GM13976 (cell line): ENCODE measurements at regions of chr1 and their contacts with region 1.

Region 1: GRCh38 chr1:115807723-115808122 is 33.2 kb downstream of the NHLH2 start:
- DNase-seq: peak; percentile 41
- CTCF ChIP-seq: peak; percentile 55

Region 2: DNA sequence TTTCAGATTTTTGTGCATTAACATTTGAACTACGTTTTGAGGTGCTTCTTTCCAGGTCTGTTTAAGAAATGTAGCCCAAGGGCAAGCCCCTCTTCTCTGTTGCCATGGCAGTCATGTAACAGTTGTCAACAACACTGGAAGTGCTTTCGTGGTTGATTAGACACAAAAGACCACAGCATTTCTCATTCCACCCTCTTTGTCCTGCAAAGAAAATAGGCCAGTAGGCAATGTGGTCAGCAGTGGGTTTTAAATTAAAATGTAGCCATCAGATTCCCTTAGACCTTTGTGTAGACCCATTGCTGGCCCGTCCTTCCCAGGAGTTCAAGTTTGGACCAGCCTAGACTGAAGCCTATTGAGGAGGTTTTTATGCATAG is 130.6 kb before region 1 on chr1:
- in situ Hi-C with region 1: no loop called
- DNase-seq: peak; percentile 45
- CTCF ChIP-seq: no peak

Region 3: DNA sequence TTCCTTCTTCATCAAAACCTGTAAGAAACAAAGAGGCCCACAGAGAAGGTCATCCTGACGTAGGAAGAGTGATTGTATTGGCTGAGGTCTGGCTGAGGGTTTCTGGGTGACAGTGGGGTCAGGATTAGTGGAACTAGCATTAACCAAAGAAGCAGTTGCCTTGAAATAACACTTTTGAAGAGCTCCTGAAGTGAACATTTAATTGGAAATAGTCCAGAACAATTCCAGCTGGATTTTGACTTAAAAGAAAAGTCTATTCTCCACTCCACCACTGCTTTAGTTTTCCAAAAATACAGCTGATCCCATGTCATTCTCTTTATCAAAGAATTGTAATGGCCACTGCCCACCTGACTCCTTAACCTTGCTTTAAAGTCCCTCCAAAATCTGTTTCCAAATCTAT is 66.9 kb before region 1 on chr1:
- in situ Hi-C with region 1: no loop called
- DNase-seq: no peak
- CTCF ChIP-seq: no peak

Region 4: DNA sequence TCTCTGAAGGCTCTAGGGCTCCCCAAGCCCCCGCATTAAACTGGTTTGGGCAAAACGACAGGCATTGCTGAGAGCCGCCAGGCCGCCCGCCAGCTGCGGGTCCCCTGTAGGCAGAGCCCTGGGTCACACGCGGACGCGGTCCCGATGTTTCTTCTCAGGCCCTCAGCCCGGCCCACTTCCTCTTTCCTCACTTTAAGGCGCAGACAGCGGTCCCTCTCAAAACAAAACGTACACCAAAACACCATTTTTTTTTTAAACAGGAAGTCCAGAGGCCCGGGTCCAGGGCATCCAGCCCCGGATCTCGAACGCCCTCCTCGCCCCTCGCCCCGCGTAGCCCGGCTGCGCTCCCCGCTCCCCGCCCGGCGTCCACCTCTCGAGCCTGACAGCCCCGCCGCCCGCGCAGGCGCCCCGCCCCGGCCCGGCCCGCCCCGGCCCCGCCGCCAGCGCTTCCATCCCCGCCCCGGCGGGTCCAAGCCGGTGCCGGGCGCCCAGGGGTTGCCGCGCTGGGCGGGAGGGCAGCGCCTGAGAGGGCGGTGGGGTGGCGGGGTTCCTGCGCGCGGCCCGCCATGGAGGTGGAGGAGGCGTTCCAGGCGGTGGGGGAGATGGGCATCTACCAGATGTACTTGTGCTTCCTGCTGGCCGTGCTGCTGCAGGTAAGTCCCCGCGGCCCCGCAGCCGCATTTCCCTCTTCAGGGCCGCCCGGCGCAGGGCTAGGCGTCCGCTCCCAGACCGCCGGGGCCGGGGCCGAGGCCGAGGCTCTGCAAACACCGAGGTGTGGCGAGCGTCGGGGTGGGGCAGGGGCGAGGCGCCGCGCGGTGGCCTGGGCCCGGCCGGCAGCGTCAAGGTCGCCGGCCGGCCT is 168.6 kb after region 1 on chr1 and contains the start of gene SLC22A15:
- in situ Hi-C with region 1: loop called (anchors 25 kb)
- DNase-seq: peak; percentile 74
- CTCF ChIP-seq: no peak